Endothelial cell of umbilical vein (primary cell): ENCODE measurements at regions of chr18 and their contacts with region 1.

Region 1: DNA sequence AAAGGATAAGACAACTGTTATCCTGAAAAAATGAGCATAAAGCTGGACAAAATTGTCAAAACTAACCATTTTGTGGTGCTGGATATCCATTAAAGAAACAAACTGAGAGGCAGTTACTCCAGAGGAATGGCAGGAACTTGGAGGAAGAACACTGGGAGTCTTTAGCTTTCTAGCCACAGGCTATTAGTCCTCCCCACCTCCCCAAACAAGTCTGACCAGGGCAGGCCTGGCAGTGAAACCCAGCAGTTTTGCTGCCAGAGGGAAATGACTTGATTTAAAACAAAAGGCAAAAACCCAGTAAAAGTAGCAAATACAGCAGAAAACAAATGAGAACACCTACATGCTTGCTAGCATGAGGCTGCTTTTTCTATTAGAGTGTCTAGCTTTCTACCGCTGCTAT is 34.9 kb downstream of the OSBPL1A start:
- DNase-seq: no peak
- H3K4me3 ChIP-seq: no peak overlapping the region
- H3K27ac ChIP-seq: no peak overlapping the region
- H3K4me1 ChIP-seq: no peaks in the 10 kb centered on the region
- H3K27me3 ChIP-seq: no peaks in the 10 kb centered on the region
- CTCF ChIP-seq: no peak
- POLR2A ChIP-seq: no peak

Region 2: DNA sequence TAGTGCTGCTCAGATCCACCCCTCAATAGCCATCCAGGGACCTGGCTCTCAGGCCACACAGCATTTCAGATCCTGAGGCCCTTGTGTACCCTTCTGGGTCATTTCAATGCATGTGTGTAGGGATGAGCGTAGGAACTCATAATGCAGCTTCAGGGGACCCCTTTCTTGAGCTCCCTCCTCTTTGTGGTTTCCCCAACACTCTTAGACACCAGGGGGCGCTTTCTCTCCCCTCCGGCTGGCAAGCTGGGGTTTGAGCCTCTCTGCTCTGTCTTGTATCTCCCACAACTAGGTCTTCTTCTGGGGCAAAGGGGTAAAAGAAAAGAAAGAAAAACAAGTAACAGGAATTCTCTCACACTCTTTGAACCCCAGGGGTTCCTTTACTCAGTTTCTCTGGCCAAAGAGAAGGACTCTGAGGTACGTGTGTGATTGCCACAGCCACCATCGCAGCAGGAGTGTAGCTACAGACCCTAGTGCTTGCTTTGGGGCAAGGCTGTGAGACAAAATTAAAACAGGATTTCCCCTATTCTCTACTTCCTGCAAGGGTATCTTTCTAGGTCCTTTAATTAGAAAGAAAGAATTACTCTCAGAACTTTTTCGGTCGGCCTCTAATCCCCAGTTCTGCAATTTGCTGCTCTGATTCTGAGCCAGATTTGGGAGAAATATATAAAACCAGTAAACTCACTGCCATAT is 185.9 kb before region 1 on chr18:
- CTCF ChIA-PET with region 1: interaction called, 26 read pairs
- POLR2A ChIA-PET with region 1: no interaction called
- dilution Hi-C with region 1: no loop called
- intact Hi-C with region 1: loop called (anchors 5 kb)
- DNase-seq: peak; percentile 43
- H3K4me3 ChIP-seq: no peak overlapping the region
- H3K27ac ChIP-seq: no peak overlapping the region
- H3K4me1 ChIP-seq: no peaks in the 10 kb centered on the region
- H3K27me3 ChIP-seq: no peaks in the 10 kb centered on the region
- CTCF ChIP-seq: peak; percentile 72 to 86
- POLR2A ChIP-seq: no peak

Region 3: GRCh38 chr18:24397694-24398365 is 35.1 kb after region 1 on chr18 and contains the start of gene OSBPL1A:
- CTCF ChIA-PET with region 1: interaction called, 21 read pairs
- POLR2A ChIA-PET with region 1: no interaction called
- dilution Hi-C with region 1: no loop called
- intact Hi-C with region 1: loop called (anchors 2 kb)
- DNase-seq: peak; percentile 95
- H3K4me3 ChIP-seq: peak within 1 kb of the TSS; percentile 4 to 86 (median 52)
- H3K27ac ChIP-seq: peak within 1 kb of the TSS; percentile 57
- H3K4me1 ChIP-seq: peaks cover 10% of the 10 kb centered on the region
- H3K27me3 ChIP-seq: no peaks in the 10 kb centered on the region
- CTCF ChIP-seq: no peak
- POLR2A ChIP-seq: peak; percentile 83
- total RNA-seq, gene OSBPL1A: 12.7 and 16.5 TPM in 2 replicates

Region 4: DNA sequence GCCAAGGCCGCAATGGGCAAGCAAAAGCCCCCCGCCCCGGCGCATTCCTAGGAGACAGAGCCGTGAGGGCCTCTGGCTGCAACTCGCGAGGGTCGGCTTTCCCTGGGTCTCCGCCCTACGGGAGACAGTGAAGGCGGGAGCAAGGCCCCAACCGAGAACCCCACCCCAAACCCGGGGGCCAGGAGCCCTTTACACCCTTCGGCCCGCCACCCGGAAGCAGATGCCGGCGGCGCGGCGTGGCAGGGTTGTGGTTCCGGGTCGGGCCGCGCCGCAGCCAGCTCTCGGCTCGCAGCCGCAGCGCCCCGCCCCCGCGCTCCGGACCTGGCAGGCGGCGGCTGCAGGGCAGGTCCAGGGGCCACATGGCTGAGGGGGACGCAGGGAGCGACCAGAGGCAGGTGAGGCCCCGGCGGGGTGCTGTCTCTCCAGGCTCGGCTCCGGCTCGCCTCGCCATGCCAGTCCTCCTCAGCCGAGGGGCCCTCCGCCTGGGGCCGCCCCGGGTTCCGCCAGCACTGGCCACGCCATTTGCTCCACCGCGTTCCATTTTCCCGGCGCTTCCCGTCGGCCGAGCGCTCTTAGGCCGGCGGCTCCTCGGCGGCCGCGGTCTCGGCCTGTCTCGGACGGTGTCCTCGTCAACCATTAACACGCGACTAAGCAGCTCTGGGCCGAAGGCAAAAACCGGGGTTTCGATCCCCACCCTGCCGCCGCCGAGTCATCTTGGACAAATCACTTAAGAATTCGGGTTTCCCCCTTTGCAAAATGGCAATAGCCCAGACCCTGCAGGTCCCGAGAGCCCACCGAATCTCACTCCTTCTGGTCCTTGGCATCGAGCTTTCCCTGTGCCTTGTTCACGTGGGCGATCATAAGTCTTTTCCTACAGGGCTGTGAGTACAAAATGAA is 63.9 kb after region 1 on chr18 and contains the start of gene IMPACT:
- CTCF ChIA-PET with region 1: interaction called, 32 read pairs
- POLR2A ChIA-PET with region 1: no interaction called
- dilution Hi-C with region 1: no loop called
- intact Hi-C with region 1: loop called (anchors 5 kb)
- DNase-seq: peak; percentile 83
- H3K4me3 ChIP-seq: peak within 1 kb of the TSS; percentile 70 to 92 (median 88)
- H3K27ac ChIP-seq: peak within 1 kb of the TSS; percentile 53
- H3K4me1 ChIP-seq: peaks cover 12% of the 10 kb centered on the region
- H3K27me3 ChIP-seq: peaks cover 10 to 11% of the 10 kb centered on the region in 2 experiments
- CTCF ChIP-seq: no peak
- POLR2A ChIP-seq: peak; percentile 91
- total RNA-seq, gene IMPACT: 28.4 and 28.6 TPM in 2 replicates

Region 5: DNA sequence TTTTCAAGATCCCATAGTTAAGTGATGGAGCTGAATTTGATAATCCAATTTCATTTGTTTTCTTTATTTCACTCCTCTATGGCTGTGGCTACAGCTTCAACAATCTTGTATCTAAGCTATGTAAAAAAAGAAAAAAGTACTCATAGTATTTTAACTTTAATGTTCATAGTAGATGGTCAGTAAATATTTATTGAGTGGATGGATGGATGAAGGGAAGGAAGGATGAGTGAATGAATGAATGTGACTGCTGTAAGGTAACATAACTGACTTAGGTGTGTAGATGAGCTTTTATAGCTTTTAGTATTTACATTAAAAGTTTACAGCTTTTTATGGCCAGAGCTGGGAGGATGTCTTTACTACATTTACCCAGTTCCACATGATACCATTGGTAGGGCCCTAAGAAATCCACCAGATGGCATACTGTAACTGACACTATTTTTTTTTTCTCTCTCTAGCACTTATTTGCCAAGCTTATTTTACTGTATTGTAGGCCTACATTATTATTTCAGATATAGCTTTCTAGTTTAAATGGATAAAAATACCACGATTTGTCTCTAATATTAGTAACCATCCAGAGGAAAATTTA is 84.3 kb after region 1 on chr18:
- CTCF ChIA-PET with region 1: interaction called, 13 read pairs
- POLR2A ChIA-PET with region 1: no interaction called
- dilution Hi-C with region 1: no loop called
- intact Hi-C with region 1: no loop called
- DNase-seq: no peak
- H3K4me3 ChIP-seq: no peak overlapping the region
- H3K27ac ChIP-seq: no peak overlapping the region
- H3K4me1 ChIP-seq: no peaks in the 10 kb centered on the region
- H3K27me3 ChIP-seq: no peaks in the 10 kb centered on the region
- CTCF ChIP-seq: no peak
- POLR2A ChIP-seq: no peak

Region 6: GRCh38 chr18:24567199-24567598 is 204.4 kb after region 1 on chr18:
- CTCF ChIA-PET with region 1: no interaction called
- POLR2A ChIA-PET with region 1: no interaction called
- dilution Hi-C with region 1: no loop called
- intact Hi-C with region 1: no loop called
- DNase-seq: peak; percentile 11
- H3K4me3 ChIP-seq: no peak overlapping the region
- H3K27ac ChIP-seq: no peak overlapping the region
- H3K4me1 ChIP-seq: no peaks in the 10 kb centered on the region
- H3K27me3 ChIP-seq: peaks cover 0 to 5% of the 10 kb centered on the region in 2 experiments
- CTCF ChIP-seq: no peak
- POLR2A ChIP-seq: no peak